ENCODE measurements at regions of chr9 and their contacts with region 1.

Region 1: GRCh38 chr9:119074017-119074416 is 295.2 kb downstream of the BRINP1 start:
- DNase-seq: no peak
- ATAC-seq: no peak
- H3K4me3 ChIP-seq: no peak overlapping the region
- H3K27ac ChIP-seq: no peak overlapping the region
- H3K4me1 ChIP-seq: no peaks in the 10 kb centered on the region
- H3K27me3 ChIP-seq: no peaks in the 10 kb centered on the region
- CTCF ChIP-seq: no peak

Region 2: GRCh38 chr9:119137479-119137878 is 63.5 kb after region 1 on chr9:
- intact Hi-C with region 1: no loop called
- DNase-seq: no peak
- ATAC-seq: no peak
- H3K4me3 ChIP-seq: no peak overlapping the region
- H3K27ac ChIP-seq: no peak overlapping the region
- H3K4me1 ChIP-seq: no peaks in the 10 kb centered on the region
- H3K27me3 ChIP-seq: no peaks in the 10 kb centered on the region
- CTCF ChIP-seq: no peak

Region 3: GRCh38 chr9:119252671-119253299 is 178.8 kb after region 1 on chr9:
- intact Hi-C with region 1: loop called in 1 of 10 experiments (anchors 10 kb)
- DNase-seq: no peak
- ATAC-seq: no peak
- H3K4me3 ChIP-seq: no peak overlapping the region
- H3K27ac ChIP-seq: no peak overlapping the region
- H3K4me1 ChIP-seq: no peaks in the 10 kb centered on the region
- H3K27me3 ChIP-seq: no peaks in the 10 kb centered on the region
- CTCF ChIP-seq: no peak